WTC11 (cell line): ENCODE measurements at regions of chr19 and their contacts with region 1.

Region 1: DNA sequence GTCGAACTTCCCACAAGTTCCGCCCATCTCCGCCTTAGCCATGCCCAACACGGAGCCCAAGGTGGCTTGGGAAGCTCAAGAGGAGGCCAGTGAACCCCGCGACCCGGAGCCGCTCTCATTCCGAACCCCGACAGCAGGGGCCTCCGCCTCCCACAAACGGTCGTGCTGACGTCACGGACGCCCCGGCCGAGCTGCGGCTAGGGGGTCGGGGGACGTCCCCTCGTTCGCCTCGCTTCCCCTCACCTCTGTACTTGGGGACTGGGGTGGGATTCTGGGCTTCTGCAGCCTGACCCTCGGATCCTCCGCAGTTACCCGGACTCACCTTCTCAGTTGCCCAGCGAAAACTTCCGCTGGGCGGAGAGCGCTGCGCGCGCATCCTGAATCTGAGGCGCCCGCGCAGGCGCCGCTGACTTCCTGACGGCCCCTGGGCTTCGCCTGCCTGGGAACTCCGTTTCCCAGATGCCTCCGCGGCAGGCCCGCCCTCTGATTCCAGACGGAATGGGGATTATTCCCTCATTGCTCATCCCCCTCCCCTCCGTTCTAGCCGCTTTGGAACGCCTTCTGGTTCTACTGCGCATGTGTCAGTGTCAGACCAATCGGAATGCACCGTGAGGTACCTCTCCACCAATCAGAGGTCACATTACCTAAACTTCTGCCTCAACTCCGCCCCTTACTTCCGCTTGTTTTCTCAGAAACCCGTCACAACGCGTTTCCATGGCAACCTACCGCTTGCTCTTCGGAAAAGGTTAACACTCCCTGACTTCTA is at the start of gene VRK3:
- DNase-seq: peak; percentile 99
- ATAC-seq: peak; percentile 90
- H3K4me3 Mint-ChIP-seq: peak within 1 kb of the TSS; percentile 95
- H3K27ac Mint-ChIP-seq: peak within 1 kb of the TSS; percentile 95
- H3K4me1 Mint-ChIP-seq: peaks cover 18% of the 10 kb centered on the region
- H3K27me3 Mint-ChIP-seq: peaks cover 3% of the 10 kb centered on the region; the same call in 1 of the 2 replicates
- CTCF ChIP-seq: no peak
- total RNA-seq, gene VRK3: 33.4 to 39.2 TPM (median 39.1 TPM) in 3 replicates

Region 2: DNA sequence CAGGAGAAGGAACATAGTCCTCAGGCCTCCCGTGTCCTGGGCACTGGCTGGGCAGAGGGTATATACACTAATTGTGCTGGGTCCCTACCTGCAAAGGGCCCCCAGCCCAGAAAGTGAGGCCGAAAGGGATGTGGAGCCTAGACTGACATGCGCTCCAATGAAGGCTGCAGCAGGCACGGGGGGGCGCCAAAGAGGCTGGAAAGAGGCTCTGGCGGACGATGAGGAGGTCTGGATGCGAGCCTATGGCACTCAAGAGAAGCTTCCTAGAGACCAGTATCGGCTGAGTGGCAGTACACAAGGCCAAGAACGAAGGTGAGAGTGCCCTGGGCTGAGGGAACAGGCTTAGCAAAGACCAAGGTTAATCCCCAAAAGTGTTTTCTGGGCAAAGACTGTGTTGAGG is 16.7 kb before region 1 on chr19:
- CTCF ChIA-PET with region 1: interaction called, 16 read pairs
- POLR2A ChIA-PET with region 1: no interaction called
- DNase-seq: peak; percentile 80
- ATAC-seq: peak; percentile 95
- H3K4me3 Mint-ChIP-seq: no peak overlapping the region
- H3K27ac Mint-ChIP-seq: no peak overlapping the region
- H3K4me1 Mint-ChIP-seq: no peaks in the 10 kb centered on the region
- H3K27me3 Mint-ChIP-seq: no peaks in the 10 kb centered on the region
- CTCF ChIP-seq: no peak

Region 3: DNA sequence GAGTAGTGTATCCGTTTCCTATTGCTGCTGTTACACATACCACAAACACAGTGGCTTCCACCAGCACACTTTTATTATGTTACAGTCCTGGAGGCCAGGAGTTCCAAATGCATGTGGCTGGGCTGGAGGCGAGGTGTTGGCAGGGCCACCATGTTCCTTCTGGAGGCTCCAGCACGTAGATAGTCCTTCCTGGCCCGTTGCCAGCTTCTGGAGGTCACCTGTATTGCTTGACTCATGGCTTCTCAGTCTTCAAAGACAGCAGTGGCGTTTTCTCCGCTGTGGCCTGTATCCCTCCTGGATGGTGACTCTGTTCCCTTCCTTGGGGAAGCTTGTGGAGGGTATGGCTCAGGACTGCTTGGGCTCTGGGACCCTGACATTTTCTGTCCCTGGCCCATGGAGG is 15.8 kb after region 1 on chr19:
- CTCF ChIA-PET with region 1: no interaction called
- POLR2A ChIA-PET with region 1: no interaction called
- DNase-seq: no peak
- ATAC-seq: no peak
- H3K4me3 Mint-ChIP-seq: no peak overlapping the region
- H3K27ac Mint-ChIP-seq: no peak overlapping the region
- H3K4me1 Mint-ChIP-seq: no peaks in the 10 kb centered on the region
- H3K27me3 Mint-ChIP-seq: peaks cover 5% of the 10 kb centered on the region
- CTCF ChIP-seq: no peak